CD4-positive, alpha-beta memory T cell (primary cell): ENCODE measurements at regions of chr6 and their contacts with region 1.

Region 1: GRCh38 chr6:150016324-150017185 is 8.8 kb downstream of the RAET1L start:
- DNase-seq: peak; percentile 60 to 79 (median 72)
- H3K4me3 ChIP-seq: no peak overlapping the region
- H3K4me3 Mint-ChIP-seq: peak overlapping the region in 2 of 8 donors; percentile 13 to 26
- H3K27ac ChIP-seq: no peak overlapping the region
- H3K27ac Mint-ChIP-seq: peak overlapping the region in 3 of 7 donors; percentile 32 to 50 (median 47)
- H3K4me1 ChIP-seq: peaks cover 8% of the 10 kb centered on the region
- H3K4me1 Mint-ChIP-seq: peaks cover 8 to 28% (median 12%) of the 10 kb centered on the region in 4 donors
- H3K27me3 ChIP-seq: peaks cover 19% of the 10 kb centered on the region
- H3K27me3 Mint-ChIP-seq: peaks cover 52 to 66% of the 10 kb centered on the region in 2 donors

Region 2: DNA sequence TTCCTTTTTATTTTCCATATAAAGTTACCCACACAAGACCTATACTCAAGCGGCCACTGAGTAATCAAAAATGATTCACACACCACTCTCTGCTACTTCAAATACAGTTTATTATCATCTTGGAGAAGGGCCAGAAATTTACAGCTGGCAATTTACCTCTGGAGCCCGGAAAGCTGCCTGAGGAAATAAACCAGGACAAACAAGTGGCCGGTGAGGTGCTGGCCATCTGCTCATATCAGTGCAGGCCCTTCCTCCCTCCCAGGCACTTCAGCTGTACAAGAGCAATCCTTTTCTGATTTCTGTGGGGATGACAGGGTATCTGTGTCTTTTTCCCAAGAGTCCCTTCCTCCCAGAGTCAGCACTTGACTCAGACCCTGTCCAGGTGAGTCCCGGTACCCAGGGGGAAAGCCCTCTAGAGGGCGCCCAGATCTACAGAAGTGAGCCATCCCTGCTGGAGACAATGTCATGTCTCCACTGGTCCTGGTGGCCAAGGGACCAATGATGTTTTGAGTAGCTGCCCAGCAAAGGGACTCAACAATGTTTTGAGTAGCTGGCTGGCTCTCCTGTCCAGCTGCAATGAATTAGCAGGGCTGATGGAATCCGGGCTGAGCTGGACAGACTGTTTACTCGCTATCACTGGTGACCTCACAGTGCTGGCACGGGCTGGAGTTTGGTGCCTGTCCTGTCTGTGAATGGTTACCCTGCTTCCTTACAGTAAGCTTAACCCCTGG is 176.0 kb before region 1 on chr6:
- CTCF ChIA-PET with region 1: interaction called, 12 read pairs
- POLR2A ChIA-PET with region 1: no interaction called
- intact Hi-C with region 1: loop called (anchors 2 kb)
- DNase-seq: peak in 3 of 5 donors; percentile 11 to 15 (median 14)
- H3K4me3 ChIP-seq: no peak overlapping the region
- H3K4me3 Mint-ChIP-seq: no peak overlapping the region
- H3K27ac ChIP-seq: no peak overlapping the region
- H3K27ac Mint-ChIP-seq: peak overlapping the region in 1 of 7 donors; percentile 19
- H3K4me1 ChIP-seq: no peaks in the 10 kb centered on the region
- H3K4me1 Mint-ChIP-seq: no peaks in the 10 kb centered on the region
- H3K27me3 ChIP-seq: no peaks in the 10 kb centered on the region
- H3K27me3 Mint-ChIP-seq: peaks cover 0 to 2% of the 10 kb centered on the region in 2 donors

Region 3: GRCh38 chr6:149925974-149926777 is 90.4 kb before region 1 on chr6:
- CTCF ChIA-PET with region 1: interaction called, 25 read pairs
- POLR2A ChIA-PET with region 1: no interaction called
- intact Hi-C with region 1: no loop called
- DNase-seq: peak; percentile 59 to 70 (median 63)
- H3K4me3 ChIP-seq: no peak overlapping the region
- H3K4me3 Mint-ChIP-seq: peak overlapping the region; percentile 14 to 60 (median 28)
- H3K27ac ChIP-seq: no peak overlapping the region
- H3K27ac Mint-ChIP-seq: peak overlapping the region in 1 of 7 donors; percentile 5
- H3K4me1 ChIP-seq: peaks cover 29% of the 10 kb centered on the region
- H3K4me1 Mint-ChIP-seq: peaks cover 11 to 38% (median 21%) of the 10 kb centered on the region in 4 donors
- H3K27me3 ChIP-seq: peaks cover 47% of the 10 kb centered on the region
- H3K27me3 Mint-ChIP-seq: peaks cover 73 to 82% of the 10 kb centered on the region in 2 donors

Region 4: GRCh38 chr6:149934249-149935156 is 82.1 kb before region 1 on chr6:
- CTCF ChIA-PET with region 1: interaction called, 28 read pairs
- POLR2A ChIA-PET with region 1: interaction called, 4 read pairs
- intact Hi-C with region 1: loop called (anchors 1 kb)
- DNase-seq: peak; percentile 72 to 80 (median 72)
- H3K4me3 ChIP-seq: no peak overlapping the region
- H3K4me3 Mint-ChIP-seq: peak overlapping the region in 2 of 8 donors; percentile 1 to 21
- H3K27ac ChIP-seq: no peak overlapping the region
- H3K27ac Mint-ChIP-seq: peak overlapping the region in 6 of 7 donors; percentile 1 to 67 (median 41)
- H3K4me1 ChIP-seq: peaks cover 15% of the 10 kb centered on the region
- H3K4me1 Mint-ChIP-seq: peaks cover 8 to 37% (median 12%) of the 10 kb centered on the region in 4 donors
- H3K27me3 ChIP-seq: peaks cover 70% of the 10 kb centered on the region
- H3K27me3 Mint-ChIP-seq: peaks cover 75 to 76% of the 10 kb centered on the region in 2 donors

Region 5: DNA sequence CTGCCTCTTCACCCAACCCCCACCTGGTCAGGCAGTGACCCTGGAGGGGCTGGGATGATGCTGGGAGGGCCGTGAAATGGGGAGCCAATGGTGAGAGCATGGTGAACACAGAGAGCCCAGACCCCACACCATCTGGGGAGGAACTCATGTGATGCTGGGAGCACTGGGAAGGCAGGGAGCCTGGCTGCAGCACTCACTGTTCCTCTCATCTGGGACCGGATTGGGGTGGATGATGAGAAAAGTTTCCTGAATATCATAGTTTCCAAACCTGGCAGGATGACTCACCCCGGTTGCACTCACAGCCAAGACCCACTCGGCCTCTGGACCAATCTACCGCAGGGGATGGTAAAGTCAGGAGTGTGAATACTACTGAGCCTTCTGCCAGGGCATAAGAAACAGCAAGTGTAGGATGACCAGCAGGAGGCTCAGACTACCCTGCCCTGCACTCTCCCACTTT is 31.0 kb before region 1 on chr6:
- CTCF ChIA-PET with region 1: no interaction called
- POLR2A ChIA-PET with region 1: no interaction called
- intact Hi-C with region 1: no loop called
- DNase-seq: no peak
- H3K4me3 ChIP-seq: no peak overlapping the region
- H3K4me3 Mint-ChIP-seq: no peak overlapping the region
- H3K27ac ChIP-seq: no peak overlapping the region
- H3K27ac Mint-ChIP-seq: no peak overlapping the region
- H3K4me1 ChIP-seq: peaks cover 14% of the 10 kb centered on the region
- H3K4me1 Mint-ChIP-seq: peaks cover 14 to 26% (median 21%) of the 10 kb centered on the region in 4 donors
- H3K27me3 ChIP-seq: peaks cover 65% of the 10 kb centered on the region
- H3K27me3 Mint-ChIP-seq: peaks cover 70 to 71% of the 10 kb centered on the region in 2 donors

Region 6: GRCh38 chr6:150046943-150047342 is 30.4 kb after region 1 on chr6:
- CTCF ChIA-PET with region 1: no interaction called
- POLR2A ChIA-PET with region 1: no interaction called
- intact Hi-C with region 1: no loop called
- DNase-seq: no peak
- H3K4me3 ChIP-seq: no peak overlapping the region
- H3K4me3 Mint-ChIP-seq: no peak overlapping the region
- H3K27ac ChIP-seq: no peak overlapping the region
- H3K27ac Mint-ChIP-seq: no peak overlapping the region
- H3K4me1 ChIP-seq: no peaks in the 10 kb centered on the region
- H3K4me1 Mint-ChIP-seq: peaks cover 0 to 3% (median 0%) of the 10 kb centered on the region in 4 donors
- H3K27me3 ChIP-seq: peaks cover 3% of the 10 kb centered on the region
- H3K27me3 Mint-ChIP-seq: peaks cover 28 to 39% of the 10 kb centered on the region in 2 donors

Region 7: GRCh38 chr6:150068720-150069648 is 52.4 kb after region 1 on chr6 and contains the start of gene ULBP3:
- CTCF ChIA-PET with region 1: no interaction called
- POLR2A ChIA-PET with region 1: no interaction called
- intact Hi-C with region 1: no loop called
- DNase-seq: peak; percentile 37 to 64 (median 52)
- H3K4me3 ChIP-seq: peak within 1 kb of the TSS; percentile 65 to 79
- H3K4me3 Mint-ChIP-seq: peak within 1 kb of the TSS; percentile 82 to 93 (median 90)
- H3K27ac ChIP-seq: peak within 1 kb of the TSS; percentile 22
- H3K27ac Mint-ChIP-seq: peak within 1 kb of the TSS; percentile 23 to 74 (median 61)
- H3K4me1 ChIP-seq: peaks cover 18% of the 10 kb centered on the region
- H3K4me1 Mint-ChIP-seq: peaks cover 8 to 30% (median 18%) of the 10 kb centered on the region in 4 donors
- H3K27me3 ChIP-seq: no peaks in the 10 kb centered on the region
- H3K27me3 Mint-ChIP-seq: peaks cover 0 to 5% of the 10 kb centered on the region in 2 donors
- total RNA-seq, gene ULBP3: 0.42 TPM in 1 of 2 experiments, not detected in the other